Naive thymus-derived CD4-positive, alpha-beta T cell (primary cell): ENCODE measurements at regions of chr4 and their contacts with region 1.

Region 1: DNA sequence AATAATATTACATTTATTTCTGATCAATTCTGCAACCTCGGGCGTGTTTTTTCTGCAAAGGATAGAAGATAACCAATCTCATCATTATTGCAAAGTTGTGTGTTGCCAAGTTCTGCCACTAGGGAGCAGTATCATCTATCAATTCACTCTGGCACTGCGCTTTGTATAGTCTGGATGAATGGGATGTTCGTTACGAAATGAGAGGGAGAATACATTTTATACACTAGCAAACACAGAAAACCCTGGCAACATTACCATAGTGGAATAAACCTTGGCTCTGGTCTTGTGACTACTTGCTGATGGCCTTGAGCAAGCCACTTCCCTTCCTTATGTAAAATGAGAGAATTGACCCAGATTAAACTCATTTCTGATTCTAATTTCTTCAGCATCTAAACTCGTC is 97.5 kb upstream of the ZNF518B start:
- DNase-seq: peak in 6 of 9 donors; percentile 12 to 55 (median 40)
- ATAC-seq: peak; percentile 76
- H3K4me3 ChIP-seq: no peak overlapping the region
- H3K4me3 Mint-ChIP-seq: peak overlapping the region in 3 of 10 donors; percentile 2 to 32 (median 27)
- H3K27ac ChIP-seq: no peak overlapping the region
- H3K27ac Mint-ChIP-seq: no peak overlapping the region
- H3K4me1 ChIP-seq: no peaks in the 10 kb centered on the region
- H3K4me1 Mint-ChIP-seq: peaks cover 4 to 8% (median 5%) of the 10 kb centered on the region in 7 donors
- H3K27me3 ChIP-seq: no peaks in the 10 kb centered on the region
- H3K27me3 Mint-ChIP-seq: peaks cover 6 to 25% (median 19%) of the 10 kb centered on the region in 5 donors

Region 2: GRCh38 chr4:9762823-9763475 is 791.7 kb before region 1 on chr4:
- CTCF ChIA-PET with region 1: no interaction called
- POLR2A ChIA-PET with region 1: no interaction called
- intact Hi-C with region 1: loop called in 1 of 2 experiments (anchors 5 kb)
- DNase-seq: peak in 8 of 9 donors; percentile 5 to 56 (median 34)
- ATAC-seq: no peak
- H3K4me3 ChIP-seq: no peak overlapping the region
- H3K4me3 Mint-ChIP-seq: no peak overlapping the region
- H3K27ac ChIP-seq: no peak overlapping the region
- H3K27ac Mint-ChIP-seq: no peak overlapping the region
- H3K4me1 ChIP-seq: no peaks in the 10 kb centered on the region
- H3K4me1 Mint-ChIP-seq: no peaks in the 10 kb centered on the region
- H3K27me3 ChIP-seq: no peaks in the 10 kb centered on the region
- H3K27me3 Mint-ChIP-seq: peaks cover 11 to 35% (median 26%) of the 10 kb centered on the region in 5 donors

Region 3: DNA sequence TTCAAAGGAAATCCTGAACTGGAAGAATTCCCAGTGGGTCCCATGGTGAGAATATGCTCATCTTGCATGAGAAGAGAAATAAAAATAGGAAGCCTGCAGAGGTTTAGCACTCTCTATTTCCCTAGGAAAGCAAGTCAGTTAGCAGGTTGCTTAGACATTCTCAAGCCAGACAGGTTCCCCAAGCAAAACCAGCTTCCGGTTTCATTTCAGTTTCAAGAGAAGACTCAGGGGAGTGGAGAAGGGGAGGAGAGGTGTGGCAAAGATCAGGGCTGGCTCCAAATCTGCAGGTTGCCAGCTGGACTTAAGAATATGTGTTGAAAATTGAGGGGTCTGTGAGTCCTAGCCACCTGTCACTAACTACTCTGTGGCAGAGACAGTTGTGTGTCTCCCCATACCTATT is 22.3 kb after region 1 on chr4:
- CTCF ChIA-PET with region 1: no interaction called
- POLR2A ChIA-PET with region 1: interaction called, 3 read pairs
- intact Hi-C with region 1: loop called in 1 of 2 experiments (anchors 2 kb)
- DNase-seq: peak in 4 of 9 donors; percentile 13 to 31 (median 26)
- ATAC-seq: no peak
- H3K4me3 ChIP-seq: no peak overlapping the region
- H3K4me3 Mint-ChIP-seq: peak overlapping the region in 6 of 10 donors; percentile 34 to 77 (median 64)
- H3K27ac ChIP-seq: no peak overlapping the region
- H3K27ac Mint-ChIP-seq: peak overlapping the region in 5 of 9 donors; percentile 33 to 93 (median 82)
- H3K4me1 ChIP-seq: no peaks in the 10 kb centered on the region
- H3K4me1 Mint-ChIP-seq: peaks cover 0 to 10% (median 2%) of the 10 kb centered on the region in 7 donors
- H3K27me3 ChIP-seq: no peaks in the 10 kb centered on the region
- H3K27me3 Mint-ChIP-seq: peaks cover 6 to 11% (median 8%) of the 10 kb centered on the region in 5 donors

Region 4: GRCh38 chr4:10684631-10685030 is 129.9 kb after region 1 on chr4 and contains the start of gene CLNK:
- CTCF ChIA-PET with region 1: no interaction called
- POLR2A ChIA-PET with region 1: no interaction called
- intact Hi-C with region 1: no loop called
- DNase-seq: no peak
- ATAC-seq: no peak
- H3K4me3 ChIP-seq: no peak within 1 kb of the TSS
- H3K4me3 Mint-ChIP-seq: no peak within 1 kb of the TSS
- H3K27ac ChIP-seq: no peak within 1 kb of the TSS
- H3K27ac Mint-ChIP-seq: no peak within 1 kb of the TSS
- H3K4me1 ChIP-seq: no peaks in the 10 kb centered on the region
- H3K4me1 Mint-ChIP-seq: peaks cover 0 to 6% (median 0%) of the 10 kb centered on the region in 7 donors
- H3K27me3 ChIP-seq: no peaks in the 10 kb centered on the region
- H3K27me3 Mint-ChIP-seq: no peaks in the 10 kb centered on the region
- total RNA-seq, gene CLNK: 0.13 to 0.66 (median 0.22) TPM in 3 of 5 experiments, not detected in the others

Region 5: DNA sequence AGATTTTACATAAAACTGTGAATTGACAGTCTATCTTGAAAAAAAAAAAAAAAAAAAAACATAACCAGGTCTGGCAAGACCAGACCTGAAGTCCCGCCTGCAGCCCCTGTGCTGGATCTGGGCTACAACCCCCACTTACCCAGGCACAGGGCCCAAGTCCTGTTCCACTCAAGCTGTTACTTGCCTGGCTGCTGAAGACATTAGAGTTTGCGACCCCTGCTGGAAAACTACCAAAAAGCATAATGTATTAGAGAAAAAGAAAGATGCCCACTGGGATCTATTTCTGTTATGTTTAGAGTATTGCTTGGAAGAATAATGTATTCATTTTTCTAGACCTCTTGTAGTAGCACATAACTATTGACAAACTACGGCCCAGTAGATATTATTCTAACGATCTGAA is 869.3 kb after region 1 on chr4:
- CTCF ChIA-PET with region 1: interaction called, 4 read pairs
- POLR2A ChIA-PET with region 1: no interaction called
- intact Hi-C with region 1: loop called (anchors 1 to 10 kb)
- DNase-seq: peak in 4 of 9 donors; percentile 13 to 49 (median 31)
- ATAC-seq: peak; percentile 41
- H3K4me3 ChIP-seq: no peak overlapping the region
- H3K4me3 Mint-ChIP-seq: no peak overlapping the region
- H3K27ac ChIP-seq: no peak overlapping the region
- H3K27ac Mint-ChIP-seq: no peak overlapping the region
- H3K4me1 ChIP-seq: peaks cover 0 to 8% of the 10 kb centered on the region in 2 donors
- H3K4me1 Mint-ChIP-seq: peaks cover 7 to 16% (median 14%) of the 10 kb centered on the region in 7 donors
- H3K27me3 ChIP-seq: no peaks in the 10 kb centered on the region
- H3K27me3 Mint-ChIP-seq: peaks cover 18 to 33% (median 23%) of the 10 kb centered on the region in 5 donors

Region 6: DNA sequence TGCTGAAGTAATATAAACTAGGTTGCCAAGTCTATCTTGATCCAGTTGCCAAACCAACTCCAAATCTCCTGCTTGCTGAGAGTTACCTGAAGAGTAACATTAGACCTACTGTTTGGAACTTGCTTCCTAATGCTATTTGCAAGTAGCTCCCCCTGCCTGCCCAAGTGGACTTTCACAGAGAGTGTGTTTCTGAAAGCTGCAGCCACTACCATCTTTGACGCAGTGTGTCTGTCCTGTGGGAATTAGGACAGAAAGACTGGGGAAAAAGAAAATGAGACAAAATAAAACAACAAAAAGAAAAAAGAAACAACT is 1069.0 kb after region 1 on chr4:
- CTCF ChIA-PET with region 1: interaction called, 3 read pairs
- POLR2A ChIA-PET with region 1: no interaction called
- intact Hi-C with region 1: loop called in 1 of 2 experiments (anchors 1 kb)
- DNase-seq: peak in 2 of 9 donors; percentile 3 to 7
- ATAC-seq: no peak
- H3K4me3 ChIP-seq: no peak overlapping the region
- H3K4me3 Mint-ChIP-seq: no peak overlapping the region
- H3K27ac ChIP-seq: no peak overlapping the region
- H3K27ac Mint-ChIP-seq: no peak overlapping the region
- H3K4me1 ChIP-seq: no peaks in the 10 kb centered on the region
- H3K4me1 Mint-ChIP-seq: no peaks in the 10 kb centered on the region
- H3K27me3 ChIP-seq: no peaks in the 10 kb centered on the region
- H3K27me3 Mint-ChIP-seq: peaks cover 0 to 5% (median 3%) of the 10 kb centered on the region in 5 donors